Motor neuron (in vitro differentiated cells): ENCODE measurements at regions of chr18 and their contacts with region 1.

Region 1: GRCh38 chr18:63979409-63979920 is 9.6 kb downstream of the SERPINB8 start:
- ATAC-seq: peak in 7 of 8 experiments; percentile 33 to 92 (median 70)
- H3K4me3 ChIP-seq: no peak overlapping the region
- H3K27ac ChIP-seq: no peak overlapping the region
- H3K4me1 ChIP-seq: no peaks in the 10 kb centered on the region

Region 2: GRCh38 chr18:63518178-63519012 is 461.1 kb before region 1 on chr18:
- in situ Hi-C with region 1: loop called in 1 of 9 experiments (anchors 25 kb)
- ATAC-seq: peak; percentile 83 to 98 (median 90)
- H3K4me3 ChIP-seq: no peak overlapping the region
- H3K27ac ChIP-seq: no peak overlapping the region
- H3K4me1 ChIP-seq: no peaks in the 10 kb centered on the region

Region 3: GRCh38 chr18:64027931-64028695 is 48.6 kb after region 1 on chr18:
- in situ Hi-C with region 1: no loop called
- ATAC-seq: no peak
- H3K4me3 ChIP-seq: no peak overlapping the region
- H3K27ac ChIP-seq: no peak overlapping the region
- H3K4me1 ChIP-seq: no peaks in the 10 kb centered on the region

Region 4: DNA sequence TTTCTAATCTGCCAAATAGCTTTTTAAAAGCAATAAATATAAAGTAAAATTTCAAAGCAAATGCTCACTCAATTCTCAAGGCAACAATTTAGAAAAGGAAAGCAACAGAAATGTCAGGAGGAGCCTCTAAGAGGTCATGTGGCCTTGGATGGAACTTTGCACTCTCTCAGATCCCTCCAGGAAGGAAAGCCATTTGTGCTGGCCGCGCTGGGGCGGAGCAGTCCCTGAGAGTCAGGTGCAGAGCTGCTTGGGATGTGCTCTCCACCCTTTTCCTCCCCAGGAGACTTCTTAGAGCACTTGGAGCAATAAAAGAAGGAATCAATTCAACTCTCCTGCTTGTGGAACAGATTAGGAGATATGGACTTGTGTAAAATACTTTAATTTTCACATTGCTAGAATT is 549.2 kb after region 1 on chr18:
- in situ Hi-C with region 1: no loop called
- ATAC-seq: no peak
- H3K4me3 ChIP-seq: no peak overlapping the region
- H3K27ac ChIP-seq: no peak overlapping the region
- H3K4me1 ChIP-seq: no peaks in the 10 kb centered on the region